ENCODE measurements at regions of chr11 and their contacts with region 1.

Region 1: DNA sequence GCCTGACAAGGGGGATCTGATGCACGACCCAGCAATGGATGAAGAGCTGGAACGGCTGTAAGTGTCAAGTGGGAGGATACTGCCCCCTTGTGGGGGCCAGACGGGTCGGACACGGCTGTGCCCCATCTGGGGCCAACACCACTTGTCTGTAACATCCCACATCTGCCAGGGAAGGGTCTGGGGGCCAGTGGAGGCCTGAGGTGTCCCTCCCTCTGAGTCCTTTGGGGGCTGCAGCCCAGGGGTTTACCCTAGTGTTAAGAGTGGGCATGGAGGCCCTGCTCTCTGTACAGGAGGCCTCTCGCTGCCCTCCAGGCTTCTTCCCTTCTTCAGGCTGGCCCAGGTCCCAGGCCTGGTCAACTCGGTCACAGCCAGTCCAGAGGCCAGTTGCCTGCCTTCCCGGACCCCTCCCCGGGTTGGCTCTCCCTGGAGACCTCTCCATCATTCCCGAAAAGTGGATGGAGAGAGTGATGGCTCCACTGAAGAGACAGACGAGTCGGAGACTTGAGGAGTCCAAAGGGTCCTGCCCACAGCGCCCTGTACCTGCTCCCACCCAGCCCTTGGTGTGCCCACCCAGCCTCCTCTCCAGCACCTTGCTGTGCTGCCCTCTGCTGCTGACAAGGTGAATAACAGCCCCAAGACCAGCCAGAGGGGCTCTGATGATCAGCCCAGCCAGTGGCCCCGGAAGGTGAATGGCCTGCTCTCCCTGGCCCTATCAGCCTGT is 15.4 kb downstream of the ARFGAP2 start:
- DNase-seq: peak; percentile 82
- ATAC-seq: peak; percentile 83
- H3K4me3 Mint-ChIP-seq: no peak overlapping the region
- H3K27ac Mint-ChIP-seq: no peak overlapping the region
- H3K4me1 Mint-ChIP-seq: 0 out of 2 replicates have a peak, but pooled peaks cover 3% of the 10 kb centered on the region
- H3K27me3 Mint-ChIP-seq: no peaks in the 10 kb centered on the region
- CTCF ChIP-seq: peak; percentile 53; the same call in 1 of the 2 replicates

Region 2: DNA sequence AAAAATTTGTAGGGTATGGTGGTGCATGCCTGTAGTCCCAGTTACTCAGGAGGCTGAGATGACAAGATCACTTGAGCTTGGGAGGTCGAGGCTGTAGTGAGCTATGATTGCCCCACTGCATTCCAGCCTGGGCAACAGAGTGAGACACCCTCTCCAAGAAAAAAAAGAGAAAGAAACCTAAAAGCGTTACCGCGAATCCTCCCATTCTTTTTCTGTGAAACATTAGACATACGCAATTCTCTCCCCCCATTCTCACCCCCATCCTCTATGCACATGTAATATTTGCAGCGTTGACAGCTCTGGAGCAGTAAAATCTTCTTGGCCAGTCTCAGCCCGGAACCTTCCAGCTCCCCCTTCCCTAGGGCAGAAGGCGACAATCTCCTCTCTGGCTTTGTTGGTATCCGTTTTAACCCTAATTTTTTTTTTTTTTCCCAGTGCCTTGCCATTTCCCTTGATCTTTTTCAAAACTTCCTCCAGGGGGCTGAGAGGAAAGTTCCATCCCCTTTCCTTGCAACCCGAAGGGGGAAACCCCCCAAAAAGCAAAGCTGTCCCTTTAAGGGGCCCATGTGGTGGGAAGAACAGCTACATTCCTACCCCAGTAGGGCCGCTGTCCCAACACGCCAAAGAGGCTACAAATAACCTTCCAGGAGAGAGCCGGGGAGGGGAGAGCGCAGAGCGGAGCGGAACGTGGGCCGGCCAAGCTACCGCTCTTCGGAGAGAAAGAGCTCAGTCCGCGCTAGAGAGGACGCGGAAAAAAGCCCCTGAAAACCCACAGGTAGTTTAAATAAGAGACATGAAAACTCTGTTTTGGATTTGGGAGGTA is 244.8 kb before region 1 on chr11:
- CTCF ChIA-PET with region 1: interaction called, 23 read pairs
- POLR2A ChIA-PET with region 1: interaction called, 3 read pairs
- DNase-seq: peak; percentile 70
- ATAC-seq: peak; percentile 18
- H3K4me3 Mint-ChIP-seq: peak overlapping the region; percentile 89
- H3K27ac Mint-ChIP-seq: peak overlapping the region; percentile 50
- H3K4me1 Mint-ChIP-seq: peaks cover 71% of the 10 kb centered on the region
- H3K27me3 Mint-ChIP-seq: peaks cover 7% of the 10 kb centered on the region; the same call in 1 of the 2 replicates
- CTCF ChIP-seq: no peak

Region 3: GRCh38 chr11:46948378-46949131 is 212.7 kb before region 1 on chr11:
- CTCF ChIA-PET with region 1: no interaction called
- POLR2A ChIA-PET with region 1: no interaction called
- DNase-seq: no peak
- ATAC-seq: no peak
- H3K4me3 Mint-ChIP-seq: no peak overlapping the region
- H3K27ac Mint-ChIP-seq: 0 out of 2 replicates have a peak overlapping the region, but pooled peaks have one; percentile 74
- H3K4me1 Mint-ChIP-seq: no peaks in the 10 kb centered on the region; the same call in 1 of the 2 replicates
- H3K27me3 Mint-ChIP-seq: no peaks in the 10 kb centered on the region
- CTCF ChIP-seq: no peak

Region 4: GRCh38 chr11:47176328-47177228 is 15.3 kb after region 1 on chr11 and contains the start of gene ARFGAP2:
- CTCF ChIA-PET with region 1: interaction called, 12 read pairs
- POLR2A ChIA-PET with region 1: interaction called, 6 read pairs
- DNase-seq: peak; percentile 95
- ATAC-seq: peak; percentile 94
- H3K4me3 Mint-ChIP-seq: peak within 1 kb of the TSS; percentile 88
- H3K27ac Mint-ChIP-seq: peak within 1 kb of the TSS; percentile 98
- H3K4me1 Mint-ChIP-seq: peaks cover 16% of the 10 kb centered on the region
- H3K27me3 Mint-ChIP-seq: no peaks in the 10 kb centered on the region
- CTCF ChIP-seq: no peak
- total RNA-seq, gene ARFGAP2: 55.7 to 73.0 TPM (median 60.5 TPM) in 3 replicates

Region 5: GRCh38 chr11:47220401-47220824 is 59.1 kb after region 1 on chr11:
- CTCF ChIA-PET with region 1: no interaction called
- POLR2A ChIA-PET with region 1: no interaction called
- DNase-seq: no peak
- ATAC-seq: no peak
- H3K4me3 Mint-ChIP-seq: no peak overlapping the region
- H3K27ac Mint-ChIP-seq: peak overlapping the region; percentile 83
- H3K4me1 Mint-ChIP-seq: peaks cover 27% of the 10 kb centered on the region
- H3K27me3 Mint-ChIP-seq: no peaks in the 10 kb centered on the region
- CTCF ChIP-seq: no peak